Activated naive CD4-positive, alpha-beta T cell treated with anti-CD3 and anti-CD28 coated beads for 36 hours (primary cell): ENCODE measurements at regions of chr10 and their contacts with region 1.

Region 1: DNA sequence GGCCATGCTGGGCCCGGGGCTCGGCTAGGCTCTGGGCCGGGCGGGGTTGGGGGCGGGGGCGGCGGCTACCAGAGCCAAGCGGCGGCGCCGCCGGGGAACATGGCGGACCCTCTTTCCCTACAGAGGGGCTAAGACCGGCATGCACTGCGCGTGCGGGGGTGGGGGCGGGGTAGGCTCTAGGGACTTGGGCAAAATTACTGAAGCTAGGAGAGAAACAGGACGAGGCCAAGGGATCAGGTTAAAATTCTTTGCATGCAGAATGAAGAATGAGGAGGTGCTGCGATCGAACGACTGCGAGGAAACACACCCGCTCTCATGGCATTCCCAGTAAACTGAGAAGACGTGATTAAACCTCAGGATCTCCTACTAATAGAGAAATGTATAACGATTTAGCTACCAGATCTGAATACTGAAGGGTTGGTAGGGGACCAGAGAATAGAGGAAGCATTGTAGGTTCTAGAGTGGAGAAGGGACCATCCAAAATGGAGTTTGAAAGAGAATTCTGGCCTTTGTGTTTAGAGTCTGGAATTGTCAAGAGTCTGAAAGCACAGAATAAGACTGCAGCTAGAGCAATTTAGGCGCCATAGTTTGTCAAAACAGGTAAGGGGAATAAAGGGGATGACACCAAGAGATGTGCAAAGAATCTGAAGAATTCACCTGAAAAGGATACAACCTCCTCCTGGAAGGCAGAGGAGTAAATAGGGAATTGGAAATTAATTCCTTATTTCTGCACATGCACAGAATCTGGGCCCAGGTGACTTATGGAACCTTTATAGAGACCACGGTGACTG is at the start of gene PPP3CB:
- DNase-seq: peak; percentile 95
- H3K4me3 Mint-ChIP-seq: peak within 1 kb of the TSS; percentile 93
- H3K27ac Mint-ChIP-seq: peak within 1 kb of the TSS; percentile 95
- H3K4me1 Mint-ChIP-seq: peaks cover 40% of the 10 kb centered on the region
- H3K27me3 Mint-ChIP-seq: no peaks in the 10 kb centered on the region
- total RNA-seq, gene PPP3CB: 34.9 to 35.8 TPM

Region 2: GRCh38 chr10:72215652-72216549 is 1280.2 kb before region 1 on chr10 and contains the starts of genes ANAPC16 and ASCC1:
- CTCF ChIA-PET with region 1: no interaction called
- intact Hi-C with region 1: loop called (anchors 10 kb)
- DNase-seq: peak; percentile 93
- H3K4me3 Mint-ChIP-seq: peak within 1 kb of the TSS; percentile 91
- H3K27ac Mint-ChIP-seq: peak within 1 kb of the TSS; percentile 98
- H3K4me1 Mint-ChIP-seq: peaks cover 67% of the 10 kb centered on the region
- H3K27me3 Mint-ChIP-seq: no peaks in the 10 kb centered on the region
- total RNA-seq, gene ANAPC16: 127 to 128 TPM
- total RNA-seq, gene ASCC1: 61.6 to 68.5 TPM

Region 3: GRCh38 chr10:73167783-73168464 is 328.2 kb before region 1 on chr10 and contains the starts of genes ECD and FAM149B1:
- CTCF ChIA-PET with region 1: no interaction called
- intact Hi-C with region 1: loop called (anchors 1 kb)
- DNase-seq: peak; percentile 96
- H3K4me3 Mint-ChIP-seq: peak within 1 kb of the TSS; percentile 100
- H3K27ac Mint-ChIP-seq: peak within 1 kb of the TSS; percentile 100
- H3K4me1 Mint-ChIP-seq: peaks cover 37% of the 10 kb centered on the region
- H3K27me3 Mint-ChIP-seq: no peaks in the 10 kb centered on the region
- total RNA-seq, gene ECD: 26.5 to 28.1 TPM
- total RNA-seq, gene FAM149B1: 13.3 to 13.7 TPM

Region 4: GRCh38 chr10:73252445-73253224 is 243.4 kb before region 1 on chr10 and contains the start of gene MRPS16:
- CTCF ChIA-PET with region 1: no interaction called
- intact Hi-C with region 1: loop called (anchors 1 kb)
- DNase-seq: peak; percentile 97
- H3K4me3 Mint-ChIP-seq: peak within 1 kb of the TSS; percentile 98
- H3K27ac Mint-ChIP-seq: peak within 1 kb of the TSS; percentile 94
- H3K4me1 Mint-ChIP-seq: peaks cover 38% of the 10 kb centered on the region
- H3K27me3 Mint-ChIP-seq: no peaks in the 10 kb centered on the region
- total RNA-seq, gene MRPS16: 140 to 145 TPM

Region 5: GRCh38 chr10:73413528-73414229 is 82.4 kb before region 1 on chr10 and contains the start of gene ANXA7:
- CTCF ChIA-PET with region 1: no interaction called
- intact Hi-C with region 1: loop called (anchors 1 kb)
- DNase-seq: peak; percentile 96
- H3K4me3 Mint-ChIP-seq: peak within 1 kb of the TSS; percentile 95
- H3K27ac Mint-ChIP-seq: peak within 1 kb of the TSS; percentile 93
- H3K4me1 Mint-ChIP-seq: peaks cover 56% of the 10 kb centered on the region
- H3K27me3 Mint-ChIP-seq: peaks cover 5% of the 10 kb centered on the region
- total RNA-seq, gene ANXA7: 130 to 134 TPM

Region 6: GRCh38 chr10:73625884-73626752 is 130.0 kb after region 1 on chr10:
- CTCF ChIA-PET with region 1: no interaction called
- intact Hi-C with region 1: loop called (anchors 1 kb)
- DNase-seq: peak; percentile 97
- H3K4me3 Mint-ChIP-seq: peak overlapping the region; percentile 99
- H3K27ac Mint-ChIP-seq: peak overlapping the region; percentile 95
- H3K4me1 Mint-ChIP-seq: peaks cover 17% of the 10 kb centered on the region
- H3K27me3 Mint-ChIP-seq: no peaks in the 10 kb centered on the region

Region 7: DNA sequence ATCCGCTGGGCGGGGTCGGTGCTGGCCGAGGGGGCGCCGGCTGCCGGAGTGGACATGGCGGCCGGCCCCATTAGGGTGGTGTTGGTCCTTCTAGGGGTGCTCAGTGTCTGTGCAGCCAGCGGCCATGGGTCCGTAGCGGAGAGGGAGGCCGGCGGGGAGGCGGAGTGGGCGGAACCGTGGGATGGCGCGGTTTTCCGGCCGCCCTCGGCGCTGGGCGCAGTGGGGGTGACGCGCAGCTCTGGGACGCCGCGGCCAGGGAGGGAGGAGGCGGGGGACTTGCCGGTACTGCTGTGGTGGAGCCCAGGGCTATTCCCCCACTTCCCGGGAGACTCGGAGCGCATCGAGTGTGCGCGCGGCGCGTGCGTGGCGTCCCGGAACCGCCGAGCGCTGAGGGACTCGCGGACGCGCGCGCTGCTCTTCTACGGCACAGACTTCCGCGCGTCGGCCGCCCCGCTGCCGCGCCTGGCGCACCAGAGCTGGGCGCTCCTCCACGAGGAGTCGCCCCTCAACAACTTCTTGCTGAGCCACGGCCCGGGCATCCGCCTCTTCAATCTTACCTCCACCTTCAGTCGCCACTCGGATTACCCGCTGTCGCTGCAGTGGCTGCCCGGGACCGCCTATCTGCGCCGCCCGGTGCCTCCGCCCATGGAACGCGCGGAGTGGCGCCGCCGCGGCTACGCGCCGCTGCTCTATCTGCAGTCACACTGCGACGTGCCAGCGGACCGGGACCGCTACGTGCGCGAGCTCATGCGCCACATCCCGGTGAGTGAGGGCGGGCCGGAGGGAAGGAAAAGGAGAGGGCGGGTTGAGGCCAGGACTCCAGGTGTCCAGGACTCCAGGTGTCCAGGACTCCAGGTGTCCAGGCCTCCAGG is 276.4 kb after region 1 on chr10:
- CTCF ChIA-PET with region 1: no interaction called
- intact Hi-C with region 1: loop called (anchors 5 kb)
- DNase-seq: peak; percentile 81
- H3K4me3 Mint-ChIP-seq: peak overlapping the region; percentile 93
- H3K27ac Mint-ChIP-seq: peak overlapping the region; percentile 93
- H3K4me1 Mint-ChIP-seq: peaks cover 44% of the 10 kb centered on the region
- H3K27me3 Mint-ChIP-seq: no peaks in the 10 kb centered on the region

Region 8: DNA sequence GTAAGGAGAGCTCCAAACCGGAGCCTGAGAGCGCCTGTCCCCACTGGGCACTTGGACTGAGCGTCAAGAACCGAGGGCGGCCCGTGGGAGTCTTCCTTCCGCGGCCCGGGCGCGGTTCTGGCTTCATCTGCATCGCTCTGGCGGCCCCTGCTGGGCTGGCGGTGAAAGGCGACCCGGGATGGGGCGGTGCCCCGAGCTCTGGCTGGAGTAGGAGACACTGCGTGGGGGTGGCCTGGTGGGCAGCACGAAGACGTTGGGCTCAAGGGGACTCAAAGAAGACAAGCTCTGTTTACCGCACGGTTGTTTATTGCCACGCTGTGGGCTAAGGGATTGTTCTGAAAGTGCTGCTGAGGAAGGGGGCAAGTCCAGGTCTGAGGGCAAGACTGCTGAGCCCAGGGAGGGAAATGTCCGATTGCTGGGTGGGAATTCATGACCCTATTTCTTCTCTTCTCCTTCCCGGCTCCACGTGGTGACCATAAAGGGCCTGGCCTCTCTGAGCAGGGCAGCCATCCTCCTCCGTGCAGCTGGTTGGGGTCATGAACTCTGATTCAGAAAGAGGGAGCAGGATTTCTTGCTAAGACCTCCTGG is 444.6 kb after region 1 on chr10:
- CTCF ChIA-PET with region 1: no interaction called
- intact Hi-C with region 1: no loop called
- DNase-seq: peak; percentile 87
- H3K4me3 Mint-ChIP-seq: no peak overlapping the region
- H3K27ac Mint-ChIP-seq: no peak overlapping the region
- H3K4me1 Mint-ChIP-seq: peaks cover 5% of the 10 kb centered on the region
- H3K27me3 Mint-ChIP-seq: no peaks in the 10 kb centered on the region

Region 9: GRCh38 chr10:74704629-74705357 is 1208.7 kb after region 1 on chr10:
- CTCF ChIA-PET with region 1: no interaction called
- intact Hi-C with region 1: no loop called
- DNase-seq: no peak
- H3K4me3 Mint-ChIP-seq: no peak overlapping the region
- H3K27ac Mint-ChIP-seq: no peak overlapping the region
- H3K4me1 Mint-ChIP-seq: no peaks in the 10 kb centered on the region
- H3K27me3 Mint-ChIP-seq: no peaks in the 10 kb centered on the region